Breast epithelium (tissue), 4 donors: ENCODE measurements at regions of chr15 and their contacts with region 1.

Region 1: GRCh38 chr15:96296264-96296663 is 34.2 kb upstream of the NR2F2 start:
- DNase-seq: no peak
- H3K4me3 ChIP-seq: no peak overlapping the region
- H3K27ac ChIP-seq: no peak overlapping the region
- H3K4me1 ChIP-seq: no peaks in the 10 kb centered on the region
- H3K27me3 ChIP-seq: no peaks in the 10 kb centered on the region
- CTCF ChIP-seq: no peak
- POLR2A ChIP-seq: no peak

Region 2: DNA sequence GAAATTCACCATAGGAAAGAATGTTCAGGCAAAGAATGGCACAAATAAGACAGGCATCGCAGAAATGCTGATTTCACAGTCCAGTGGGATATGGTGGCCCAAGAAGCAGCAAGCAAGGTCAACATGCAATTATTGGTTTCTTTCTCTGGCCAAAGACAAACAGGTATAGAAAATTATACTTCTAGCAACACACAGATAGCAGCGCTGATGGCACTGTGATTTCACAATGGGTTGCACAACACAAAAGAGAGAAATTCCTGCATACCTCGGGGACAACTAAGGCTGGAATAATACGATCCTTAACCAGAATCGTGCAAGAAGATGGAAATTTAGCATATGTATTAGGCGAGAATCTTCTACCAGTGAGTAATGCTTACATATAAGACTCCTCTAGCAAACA is 42.1 kb before region 1 on chr15:
- intact Hi-C with region 1: loop called (anchors 5 kb)
- DNase-seq: no peak
- H3K4me3 ChIP-seq: no peak overlapping the region
- H3K27ac ChIP-seq: no peak overlapping the region
- H3K4me1 ChIP-seq: no peaks in the 10 kb centered on the region
- H3K27me3 ChIP-seq: no peaks in the 10 kb centered on the region
- CTCF ChIP-seq: no peak
- POLR2A ChIP-seq: no peak